B cell (primary cell): ENCODE measurements at regions of chr18 and their contacts with region 1.

Region 1: GRCh38 chr18:58552057-58552461 is 76.8 kb downstream of the ALPK2 start:
- DNase-seq: peak; percentile 83
- ATAC-seq: peak; percentile 80
- H3K4me3 ChIP-seq: no peak overlapping the region
- H3K4me3 Mint-ChIP-seq: peak overlapping the region; percentile 60
- H3K27ac ChIP-seq: peak overlapping the region in 1 of 2 donors; percentile 9
- H3K27ac Mint-ChIP-seq: peak overlapping the region; percentile 50
- H3K4me1 ChIP-seq: peaks cover 30 to 37% of the 10 kb centered on the region in 2 donors
- H3K4me1 Mint-ChIP-seq: peaks cover 40% of the 10 kb centered on the region
- H3K27me3 ChIP-seq: no peaks in the 10 kb centered on the region
- H3K27me3 Mint-ChIP-seq: no peaks in the 10 kb centered on the region
- CTCF ChIP-seq: no peak

Region 2: DNA sequence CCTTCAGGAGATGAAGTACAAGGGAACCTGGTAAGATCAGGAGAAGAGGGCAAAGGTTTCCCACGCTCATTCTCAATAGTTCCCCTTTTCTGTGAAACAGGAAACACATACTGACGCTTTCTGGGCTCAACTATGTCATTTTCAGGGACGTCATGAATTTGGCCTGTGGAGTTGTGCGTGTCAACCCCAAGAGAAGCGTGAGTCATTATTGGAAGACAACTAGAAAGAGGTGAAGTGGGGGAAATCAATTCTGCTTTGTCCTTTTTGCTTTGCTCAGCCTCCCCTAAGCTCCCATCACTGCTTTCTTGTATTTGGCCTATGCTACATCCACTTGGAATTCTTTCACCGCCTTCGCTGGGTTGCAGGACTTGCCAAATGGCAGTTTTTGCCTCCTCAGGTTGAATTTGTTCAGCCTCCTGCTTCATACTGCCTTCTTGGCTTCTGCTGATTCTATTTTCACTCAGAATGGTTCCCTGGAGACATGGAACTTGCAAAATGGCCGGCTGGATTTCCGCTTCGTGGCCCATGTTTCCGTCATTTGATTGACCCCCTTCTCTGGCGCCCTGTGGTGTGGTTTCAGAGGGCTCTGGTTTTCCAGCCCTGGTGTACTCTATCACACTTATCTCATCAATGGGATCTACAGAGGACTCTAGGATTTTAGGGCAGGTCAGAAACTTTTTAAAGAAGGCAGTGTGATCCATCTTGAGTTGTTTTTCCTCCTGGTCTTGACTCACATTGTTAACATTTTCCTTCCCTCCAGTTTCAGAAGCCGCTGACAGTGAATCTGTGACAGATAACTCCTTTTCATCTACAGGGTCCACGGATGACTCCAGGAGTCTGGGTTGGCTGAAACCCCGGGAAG is 16.5 kb before region 1 on chr18:
- CTCF ChIA-PET with region 1: interaction called, 25 read pairs
- POLR2A ChIA-PET with region 1: interaction called, 3 read pairs
- intact Hi-C with region 1: loop called (anchors 2 kb)
- DNase-seq: peak; percentile 90
- ATAC-seq: peak; percentile 73
- H3K4me3 ChIP-seq: peak overlapping the region in 1 of 5 experiments; percentile 11
- H3K4me3 Mint-ChIP-seq: peak overlapping the region; percentile 82
- H3K27ac ChIP-seq: peak overlapping the region in 1 of 2 donors; percentile 57
- H3K27ac Mint-ChIP-seq: peak overlapping the region; percentile 77
- H3K4me1 ChIP-seq: peaks cover 47% of the 10 kb centered on the region in 2 donors
- H3K4me1 Mint-ChIP-seq: peaks cover 62% of the 10 kb centered on the region
- H3K27me3 ChIP-seq: no peaks in the 10 kb centered on the region
- H3K27me3 Mint-ChIP-seq: no peaks in the 10 kb centered on the region
- CTCF ChIP-seq: no peak

Region 3: GRCh38 chr18:58567453-58568196 is 15.6 kb after region 1 on chr18:
- CTCF ChIA-PET with region 1: interaction called, 3 read pairs
- POLR2A ChIA-PET with region 1: no interaction called
- intact Hi-C with region 1: loop called (anchors 1 kb)
- DNase-seq: no peak
- ATAC-seq: no peak
- H3K4me3 ChIP-seq: no peak overlapping the region
- H3K4me3 Mint-ChIP-seq: no peak overlapping the region
- H3K27ac ChIP-seq: no peak overlapping the region
- H3K27ac Mint-ChIP-seq: no peak overlapping the region
- H3K4me1 ChIP-seq: peaks cover 8 to 9% of the 10 kb centered on the region in 2 donors
- H3K4me1 Mint-ChIP-seq: peaks cover 25% of the 10 kb centered on the region
- H3K27me3 ChIP-seq: no peaks in the 10 kb centered on the region
- H3K27me3 Mint-ChIP-seq: no peaks in the 10 kb centered on the region
- CTCF ChIP-seq: no peak